Natural killer cell (primary cell): ENCODE measurements at regions of chr7 and their contacts with region 1.

Region 1: DNA sequence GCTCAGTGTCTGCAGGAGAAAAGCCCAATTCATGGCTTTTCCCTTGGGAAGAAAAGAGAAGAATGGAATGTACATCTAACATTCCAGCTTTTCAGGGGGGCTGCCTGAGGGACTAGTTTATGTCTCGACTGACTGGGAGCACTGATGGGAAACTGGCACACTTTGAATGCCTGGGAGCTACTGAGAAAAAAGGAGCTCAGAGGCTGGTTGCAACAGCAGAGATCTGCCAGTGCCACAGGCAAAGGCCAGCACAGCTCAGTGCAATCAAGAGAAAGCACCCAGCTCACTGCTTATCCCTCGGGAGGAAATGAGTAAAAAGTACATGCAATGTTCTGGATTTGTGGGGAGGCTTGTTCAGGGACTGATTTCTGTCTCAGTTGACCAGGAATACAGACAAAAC is 226.2 kb downstream of the COBL start:
- DNase-seq: no peak
- ATAC-seq: no peak
- H3K4me3 ChIP-seq: no peak overlapping the region
- H3K4me3 Mint-ChIP-seq: no peak overlapping the region
- H3K27ac ChIP-seq: no peak overlapping the region
- H3K27ac Mint-ChIP-seq: no peak overlapping the region
- H3K4me1 ChIP-seq: no peaks in the 10 kb centered on the region
- H3K4me1 Mint-ChIP-seq: no peaks in the 10 kb centered on the region
- H3K27me3 ChIP-seq: no peaks in the 10 kb centered on the region
- H3K27me3 Mint-ChIP-seq: peaks cover 0 to 11% of the 10 kb centered on the region in 2 donors
- CTCF ChIP-seq: no peak

Region 2: GRCh38 chr7:51079483-51079882 is 10.9 kb before region 1 on chr7:
- intact Hi-C with region 1: loop called (anchors 1 kb)
- DNase-seq: no peak
- ATAC-seq: no peak
- H3K4me3 ChIP-seq: no peak overlapping the region
- H3K4me3 Mint-ChIP-seq: no peak overlapping the region
- H3K27ac ChIP-seq: no peak overlapping the region
- H3K27ac Mint-ChIP-seq: no peak overlapping the region
- H3K4me1 ChIP-seq: no peaks in the 10 kb centered on the region
- H3K4me1 Mint-ChIP-seq: no peaks in the 10 kb centered on the region
- H3K27me3 ChIP-seq: no peaks in the 10 kb centered on the region
- H3K27me3 Mint-ChIP-seq: peaks cover 6 to 10% of the 10 kb centered on the region in 2 donors
- CTCF ChIP-seq: no peak